Sciatic nerve (tissue), 2 donors: ENCODE measurements at regions of chr10 and their contacts with region 1.

Region 1: DNA sequence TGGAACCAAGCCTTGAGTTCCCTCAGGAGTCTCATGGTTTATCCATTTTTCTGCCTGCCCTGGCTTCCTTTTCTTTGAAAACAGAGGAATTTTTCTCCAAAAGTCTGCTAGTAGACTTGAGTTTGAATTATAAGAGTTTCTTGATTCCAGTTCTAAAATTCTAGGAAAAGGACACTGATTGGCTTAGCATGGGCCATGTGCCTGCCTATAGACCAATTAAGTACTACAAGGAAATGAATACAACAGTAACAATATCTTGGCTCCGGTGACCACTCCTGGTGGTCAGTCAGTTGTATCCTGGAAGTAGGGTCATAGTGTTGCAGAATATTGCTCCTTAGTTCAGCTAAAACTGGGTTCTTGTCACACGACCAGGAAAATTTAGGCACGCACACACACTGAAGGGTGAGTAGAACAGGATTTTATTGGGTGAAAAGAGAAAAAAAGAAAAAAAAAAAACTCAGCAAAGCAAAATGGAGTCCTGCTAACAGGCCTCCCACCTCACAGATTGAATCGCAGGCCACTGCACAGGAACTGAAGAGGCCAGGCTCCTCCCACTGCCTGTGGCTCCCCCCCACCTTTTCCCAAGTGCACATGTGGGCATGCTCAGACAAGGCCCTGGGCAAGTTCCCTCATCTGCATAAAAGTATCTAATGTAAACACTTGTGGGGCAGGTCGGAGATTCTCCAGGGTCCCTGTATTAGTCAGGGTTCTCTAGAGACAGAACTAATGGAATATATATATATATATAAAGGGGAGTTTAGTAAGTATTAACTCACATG is 155.1 kb downstream of the LYZL1 start:
- DNase-seq: no peak
- ATAC-seq: no peak

Region 2: DNA sequence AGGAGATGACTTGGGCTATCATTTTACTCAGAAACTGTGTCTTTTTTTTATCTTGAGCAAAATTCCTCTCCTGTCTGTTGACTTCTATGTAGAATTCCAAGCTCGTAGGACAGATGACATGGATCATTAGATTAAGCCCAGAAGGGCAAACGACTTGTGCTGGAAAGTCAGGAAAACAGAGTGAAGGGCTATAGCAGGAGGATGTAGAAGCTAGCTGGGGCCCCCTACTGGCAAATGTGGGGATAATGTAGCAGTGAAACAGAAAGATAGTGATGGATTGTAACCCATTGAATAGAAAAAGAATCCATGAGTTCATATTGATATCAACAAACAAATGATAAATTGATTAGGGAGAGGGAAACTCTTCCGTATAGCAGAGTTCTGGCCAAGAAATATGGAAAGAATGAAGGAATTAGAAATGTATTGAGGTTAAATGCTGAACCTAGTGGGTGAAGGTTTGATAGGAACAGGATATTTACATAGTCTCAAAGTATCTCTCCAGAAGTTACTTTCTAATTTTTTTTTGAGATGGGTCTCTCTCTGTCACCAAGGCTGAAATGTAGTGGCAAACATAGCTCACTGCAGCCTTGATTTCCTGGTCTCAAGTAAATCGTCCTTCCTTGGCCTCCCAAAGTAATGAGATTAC is 51.4 kb before region 1 on chr10:
- intact Hi-C with region 1: loop called (anchors 10 kb)
- DNase-seq: no peak
- ATAC-seq: peak; percentile 74